Posterior cingulate gyrus (tissue), 11 donors: ENCODE measurements at regions of chr12 and their contacts with region 1.

Region 1: DNA sequence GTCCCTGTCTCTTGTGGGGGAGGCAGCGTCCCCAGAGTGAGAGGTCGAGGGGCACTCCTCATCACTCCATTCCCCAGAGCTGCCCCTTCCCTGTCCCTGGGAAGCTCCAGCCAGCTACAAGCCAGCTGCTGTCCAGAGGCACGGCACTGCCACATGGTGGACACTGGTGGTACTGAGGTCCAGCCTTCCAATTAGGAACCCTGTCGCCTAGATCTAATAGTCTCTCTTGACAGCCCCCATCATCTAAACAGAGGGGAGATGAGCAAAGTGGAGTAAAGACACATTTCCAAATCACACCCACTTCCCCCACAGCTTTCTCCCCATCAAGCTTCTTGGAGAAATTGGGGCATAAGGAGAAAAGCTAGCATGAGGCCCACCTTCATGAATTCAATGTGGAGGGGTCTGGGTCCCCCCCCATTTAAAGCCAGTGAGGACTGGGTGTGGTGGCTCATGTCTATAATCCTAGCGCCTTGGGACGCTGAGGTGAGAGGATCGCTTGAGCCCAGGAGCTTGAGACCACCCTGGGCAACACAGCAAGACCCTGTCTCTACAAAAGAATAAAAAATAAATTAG is 2.1 kb upstream of the INHBE start:
- DNase-seq: peak; percentile 69 to 97 (median 86)

Region 2: GRCh38 chr12:57262126-57262822 is 190.7 kb before region 1 on chr12:
- intact Hi-C with region 1: loop called (anchors 2 kb)
- DNase-seq: no peak

Region 3: DNA sequence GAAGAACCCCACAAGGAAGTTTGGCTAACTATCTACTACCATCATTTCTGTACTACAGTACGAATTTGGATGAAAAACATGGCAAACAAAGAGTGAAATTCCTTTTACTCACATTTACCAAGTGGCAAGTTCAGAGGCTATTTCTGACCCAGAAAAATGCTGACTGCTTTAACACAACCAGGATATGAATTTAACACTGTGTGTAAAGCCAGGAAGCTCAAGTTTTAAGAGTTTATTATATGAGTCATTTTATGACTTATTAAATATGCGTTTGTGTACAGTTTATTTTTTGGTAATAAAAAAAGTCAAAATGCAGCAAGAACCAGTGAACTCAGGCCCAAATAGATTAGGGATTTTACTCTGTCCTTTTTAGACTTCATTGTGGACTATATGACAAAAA is 143.6 kb before region 1 on chr12:
- intact Hi-C with region 1: loop called (anchors 1 kb)
- DNase-seq: no peak